A549 (cell line): ENCODE measurements at regions of chr19 and their contacts with region 1.

Region 1: GRCh38 chr19:16778796-16779411 is 50.3 kb upstream of the SIN3B start:
- DNase-seq: peak; percentile 75 to 81
- ATAC-seq: peak; percentile 95 to 96
- H3K4me3 ChIP-seq: no peak overlapping the region
- H3K27ac ChIP-seq: no peak overlapping the region
- H3K4me1 ChIP-seq: no peaks in the 10 kb centered on the region
- CTCF ChIP-seq: peak; percentile 58
- EP300 ChIP-seq: no peak
- POLR2A ChIP-seq: no peak
- RAD21 ChIP-seq: peak; percentile 81 to 83

Region 2: GRCh38 chr19:16751733-16752132 is 27.2 kb before region 1 on chr19:
- CTCF ChIA-PET with region 1: no interaction called
- POLR2A ChIA-PET with region 1: no interaction called
- DNase-seq: no peak
- ATAC-seq: no peak
- H3K4me3 ChIP-seq: no peak overlapping the region
- H3K27ac ChIP-seq: no peak overlapping the region
- H3K4me1 ChIP-seq: no peaks in the 10 kb centered on the region
- CTCF ChIP-seq: no peak
- EP300 ChIP-seq: no peak
- POLR2A ChIP-seq: no peak
- RAD21 ChIP-seq: no peak

Region 3: DNA sequence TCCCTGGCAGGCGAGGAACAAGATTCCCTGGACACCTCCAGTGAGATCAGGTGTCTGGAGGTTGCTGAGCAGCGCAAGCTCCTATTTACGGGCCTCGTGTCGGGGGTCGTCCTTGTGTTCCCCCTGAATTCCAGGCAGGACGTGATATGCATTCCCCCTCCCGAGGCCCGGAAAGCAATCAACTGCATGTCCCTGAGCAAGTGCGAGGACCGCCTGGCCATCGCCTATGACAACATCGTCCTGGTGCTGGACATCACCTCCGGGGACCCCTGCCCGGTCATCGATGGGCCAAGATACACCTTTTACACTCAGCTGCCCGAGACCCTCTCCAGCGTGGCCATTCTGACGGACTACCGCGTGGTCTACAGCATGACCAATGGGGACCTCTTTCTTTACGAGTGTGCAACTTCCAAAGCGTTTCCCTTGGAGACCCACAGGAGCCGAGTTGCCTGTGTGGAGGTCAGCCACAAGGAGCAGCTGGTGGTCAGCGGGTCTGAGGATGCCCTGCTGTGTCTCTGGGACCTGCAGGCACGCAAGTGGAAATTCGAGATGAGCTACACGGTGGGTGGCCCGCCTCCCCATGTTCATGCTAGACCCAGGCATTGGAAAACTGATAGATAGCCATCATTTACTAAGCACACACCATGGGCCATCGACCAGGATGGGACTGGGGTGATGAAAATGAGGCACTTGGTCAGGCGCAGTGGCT is 28.8 kb after region 1 on chr19:
- CTCF ChIA-PET with region 1: no interaction called
- POLR2A ChIA-PET with region 1: no interaction called
- DNase-seq: no peak
- ATAC-seq: no peak
- H3K4me3 ChIP-seq: no peak overlapping the region
- H3K27ac ChIP-seq: no peak overlapping the region
- H3K4me1 ChIP-seq: no peaks in the 10 kb centered on the region
- CTCF ChIP-seq: no peak
- EP300 ChIP-seq: no peak
- POLR2A ChIP-seq: no peak
- RAD21 ChIP-seq: no peak

Region 4: GRCh38 chr19:17052439-17053210 is 273.7 kb after region 1 on chr19:
- CTCF ChIA-PET with region 1: interaction called, 41 read pairs
- POLR2A ChIA-PET with region 1: no interaction called
- DNase-seq: peak in 1 of 2 experiments; percentile 42
- ATAC-seq: peak; percentile 67 to 71
- H3K4me3 ChIP-seq: no peak overlapping the region
- H3K27ac ChIP-seq: no peak overlapping the region
- H3K4me1 ChIP-seq: no peaks in the 10 kb centered on the region
- CTCF ChIP-seq: peak; percentile 52
- EP300 ChIP-seq: no peak
- POLR2A ChIP-seq: no peak
- RAD21 ChIP-seq: peak; percentile 57 to 63

Region 5: GRCh38 chr19:17058236-17058635 is 279.3 kb after region 1 on chr19:
- CTCF ChIA-PET with region 1: interaction called, 16 read pairs
- POLR2A ChIA-PET with region 1: no interaction called
- DNase-seq: no peak
- ATAC-seq: no peak
- H3K4me3 ChIP-seq: no peak overlapping the region
- H3K27ac ChIP-seq: no peak overlapping the region
- H3K4me1 ChIP-seq: no peaks in the 10 kb centered on the region
- CTCF ChIP-seq: no peak
- EP300 ChIP-seq: no peak
- POLR2A ChIP-seq: no peak
- RAD21 ChIP-seq: no peak